Activated naive CD4-positive, alpha-beta T cell treated with anti-CD3 and anti-CD28 coated beads, Interleukin-2, amount 10 ng/mL, durations not matched to agents 7 days and 5 days (primary cell): ENCODE measurements at regions of chr6 and their contacts with region 1.

Region 1: DNA sequence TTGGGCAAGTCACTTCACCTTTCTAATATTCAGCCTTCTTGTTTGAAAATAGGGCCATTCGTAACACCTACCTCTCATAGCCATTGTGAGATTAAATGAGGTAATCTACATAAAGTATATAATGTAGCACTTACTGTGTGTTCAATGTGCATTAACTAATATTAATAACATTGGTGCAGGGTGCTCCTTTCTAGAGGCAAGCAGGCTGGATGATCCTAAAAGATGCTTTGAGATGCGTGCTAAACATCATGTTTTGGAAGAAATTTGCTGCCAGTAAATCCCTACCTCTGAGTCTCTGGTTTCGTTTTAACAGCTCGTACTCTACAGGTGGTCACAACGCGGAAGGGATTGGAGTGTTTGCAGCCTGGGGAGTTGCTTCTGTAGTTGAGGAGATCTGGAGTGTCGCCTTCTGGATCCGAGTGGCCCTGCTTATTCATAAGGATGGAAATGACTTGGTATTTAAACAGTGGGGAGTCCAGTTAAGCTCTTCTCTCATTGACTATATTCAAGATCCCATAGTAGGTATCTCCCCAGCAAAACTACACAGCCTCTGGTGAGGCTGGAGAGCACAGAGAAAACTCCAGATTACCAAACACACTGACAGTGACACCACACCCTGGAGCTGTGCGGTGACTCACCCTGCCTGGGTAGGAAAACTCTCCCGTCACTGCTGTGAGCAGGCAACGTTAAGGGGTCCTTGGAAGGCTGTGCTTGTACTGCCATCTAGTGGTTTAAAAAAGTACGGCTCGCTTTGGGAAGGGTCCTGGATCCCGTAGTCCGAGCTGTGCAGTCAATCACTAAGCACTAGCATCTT is 107.9 kb downstream of the MAP3K7 start:
- DNase-seq: peak; percentile 87
- H3K4me3 Mint-ChIP-seq: no peak overlapping the region
- H3K27ac Mint-ChIP-seq: peak overlapping the region; percentile 4
- H3K4me1 Mint-ChIP-seq: peaks cover 55% of the 10 kb centered on the region
- H3K27me3 Mint-ChIP-seq: no peaks in the 10 kb centered on the region

Region 2: GRCh38 chr6:89940225-89941027 is 538.6 kb before region 1 on chr6:
- CTCF ChIA-PET with region 1: interaction called, 133 read pairs
- DNase-seq: peak; percentile 83
- H3K4me3 Mint-ChIP-seq: no peak overlapping the region
- H3K27ac Mint-ChIP-seq: peak overlapping the region; percentile 77
- H3K4me1 Mint-ChIP-seq: peaks cover 49% of the 10 kb centered on the region
- H3K27me3 Mint-ChIP-seq: no peaks in the 10 kb centered on the region

Region 3: DNA sequence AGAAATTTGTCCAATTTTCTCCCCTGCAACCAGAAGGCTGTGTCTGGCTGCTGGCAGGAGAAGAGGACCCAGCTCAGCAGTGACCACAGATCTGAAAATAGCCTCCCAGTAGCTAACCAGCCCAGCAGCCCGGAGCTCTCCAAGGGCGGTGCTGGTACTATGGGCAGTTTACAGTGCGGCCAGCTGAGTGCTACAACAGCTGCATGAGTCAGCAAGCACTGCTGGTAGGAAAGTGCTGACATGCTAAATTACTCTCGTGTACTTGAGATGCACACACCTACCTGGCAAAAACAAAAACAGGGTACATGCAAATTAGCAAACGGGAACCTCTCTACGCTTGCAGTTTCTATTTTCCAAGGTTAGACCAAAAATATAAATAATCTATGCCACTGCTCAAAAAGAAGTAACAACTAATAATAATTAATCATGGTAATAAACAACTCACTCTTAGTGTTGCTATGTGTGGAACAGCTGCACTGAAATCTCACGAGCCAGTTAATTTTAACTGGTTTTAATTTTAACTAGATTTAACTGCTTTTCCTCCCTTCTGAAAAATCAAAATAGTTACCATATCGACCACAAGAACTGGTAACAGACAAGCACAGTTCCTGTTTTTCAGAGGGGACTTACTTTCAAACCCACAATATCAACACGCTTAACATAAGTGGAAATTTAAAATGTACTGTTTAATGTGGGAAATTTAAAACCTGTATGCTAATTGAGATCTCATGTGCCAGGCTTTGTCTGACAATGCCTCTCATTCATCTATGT is 193.2 kb before region 1 on chr6:
- CTCF ChIA-PET with region 1: interaction called, 193 read pairs
- DNase-seq: peak; percentile 70
- H3K4me3 Mint-ChIP-seq: peak overlapping the region; percentile 73
- H3K27ac Mint-ChIP-seq: peak overlapping the region; percentile 96
- H3K4me1 Mint-ChIP-seq: peaks cover 93% of the 10 kb centered on the region
- H3K27me3 Mint-ChIP-seq: no peaks in the 10 kb centered on the region

Region 4: GRCh38 chr6:90393232-90393884 is 85.6 kb before region 1 on chr6:
- CTCF ChIA-PET with region 1: interaction called, 104 read pairs
- DNase-seq: peak; percentile 85
- H3K4me3 Mint-ChIP-seq: no peak overlapping the region
- H3K27ac Mint-ChIP-seq: peak overlapping the region; percentile 1
- H3K4me1 Mint-ChIP-seq: peaks cover 55% of the 10 kb centered on the region
- H3K27me3 Mint-ChIP-seq: no peaks in the 10 kb centered on the region

Region 5: GRCh38 chr6:90413867-90414266 is 65.1 kb before region 1 on chr6:
- CTCF ChIA-PET with region 1: interaction called, 13 read pairs
- DNase-seq: peak; percentile 84
- H3K4me3 Mint-ChIP-seq: peak overlapping the region; percentile 48
- H3K27ac Mint-ChIP-seq: peak overlapping the region; percentile 75
- H3K4me1 Mint-ChIP-seq: peaks cover 63% of the 10 kb centered on the region
- H3K27me3 Mint-ChIP-seq: peaks cover 4% of the 10 kb centered on the region

Region 6: DNA sequence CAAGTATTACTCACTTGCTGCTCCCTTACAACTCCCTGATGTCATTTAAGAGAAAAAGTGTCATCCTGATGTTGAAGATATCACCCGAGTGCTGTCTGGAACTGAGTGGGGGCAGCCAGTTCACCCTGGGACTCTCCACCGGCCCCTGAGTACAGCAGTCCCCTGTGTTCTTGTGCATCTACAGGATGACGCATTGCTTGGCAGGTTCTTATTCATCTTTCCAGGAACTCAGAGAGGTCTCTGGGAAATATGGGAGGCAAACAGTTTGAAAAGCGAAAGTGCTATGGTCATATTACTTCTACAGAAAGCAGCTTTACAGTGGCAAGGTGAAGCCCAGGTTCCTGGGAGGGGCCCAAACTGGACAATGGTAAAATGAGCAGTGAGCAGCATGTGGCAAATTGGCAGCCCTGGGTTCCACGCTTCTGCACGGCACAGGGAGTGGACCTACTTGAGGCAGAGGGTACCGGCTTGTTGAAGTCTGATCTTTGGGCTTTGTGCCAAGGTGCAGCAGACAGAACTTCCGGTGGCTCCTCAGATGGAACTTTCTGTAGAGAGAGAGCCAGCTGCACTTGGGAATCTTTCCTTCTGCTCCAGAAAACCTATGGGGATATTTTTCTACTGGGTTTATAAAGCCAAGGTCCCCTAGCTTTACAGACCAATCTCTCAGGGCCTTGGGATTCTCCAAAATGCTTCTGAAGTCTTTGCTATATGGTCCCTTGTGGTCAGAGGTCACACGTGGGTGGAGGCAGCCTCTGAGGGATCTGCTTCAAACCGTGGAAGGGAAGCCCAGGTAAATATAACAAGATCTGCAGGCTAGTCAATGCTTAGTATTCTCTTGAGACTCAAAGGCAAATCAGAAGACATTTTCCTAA is 20.4 kb before region 1 on chr6:
- CTCF ChIA-PET with region 1: interaction called, 59 read pairs
- DNase-seq: peak; percentile 77
- H3K4me3 Mint-ChIP-seq: peak overlapping the region; percentile 65
- H3K27ac Mint-ChIP-seq: peak overlapping the region; percentile 93
- H3K4me1 Mint-ChIP-seq: peaks cover 69% of the 10 kb centered on the region
- H3K27me3 Mint-ChIP-seq: no peaks in the 10 kb centered on the region